Head of caudate nucleus (tissue), 42 donors: ENCODE measurements at regions of chr1 and their contacts with region 1.

Region 1: DNA sequence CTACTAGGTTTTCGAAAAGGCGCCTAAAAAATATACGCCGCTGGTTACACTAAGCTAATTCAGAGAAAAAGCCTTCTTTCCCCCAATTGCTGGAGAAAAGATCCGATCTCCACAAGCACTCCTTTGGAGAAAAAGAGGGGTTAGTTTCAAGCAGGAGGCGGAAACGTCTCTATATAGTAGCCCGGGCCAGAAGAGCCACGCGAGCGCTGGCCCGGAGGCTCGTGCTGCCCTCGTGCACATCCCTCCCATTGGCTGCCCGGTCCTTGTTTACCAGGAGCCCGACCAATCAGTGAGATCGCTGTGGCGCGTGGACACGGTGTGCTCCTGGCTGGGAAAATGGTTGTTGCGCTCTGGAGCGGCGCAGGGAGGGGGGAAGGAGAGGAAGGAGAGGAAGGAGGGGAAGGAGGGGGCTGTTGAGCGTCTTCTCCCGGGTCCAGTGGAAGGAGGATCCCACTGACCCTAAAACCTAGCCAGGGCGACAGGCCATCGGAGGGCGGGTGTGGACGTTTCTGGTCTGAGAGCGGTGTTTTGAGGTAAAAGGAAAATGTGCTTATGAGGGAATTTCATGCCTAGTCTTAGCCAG is at the start of gene TXNIP:
- DNase-seq: peak; percentile 96 to 100 (median 99)

Region 2: GRCh38 chr1:145963995-145964901 is 32.3 kb before region 1 on chr1 and contains the starts of genes ANKRD34A and POLR3GL:
- intact Hi-C with region 1: loop called (anchors 5 kb)
- DNase-seq: peak; percentile 85 to 99 (median 97)